Activated T-helper 2 cell treated with anti-CD3 and anti-CD28 coated beads, Interferon-gamma antibody, Interleukin-2, Interleukin-4, amounts not matched to agents 10 μg/mL and 5 μg/mL and 100 μg/mL, durations not matched to agents 14 hours and 24 hours and 36 hours (primary cell): ENCODE measurements at regions of chr2 and their contacts with region 1.

Region 1: GRCh38 chr2:218406209-218406948 is 6.7 kb downstream of the CTDSP1 start:
- DNase-seq: peak; percentile 91
- H3K4me3 Mint-ChIP-seq: peak overlapping the region; percentile 76
- H3K27ac Mint-ChIP-seq: peak overlapping the region; percentile 81
- H3K4me1 Mint-ChIP-seq: peaks cover 36% of the 10 kb centered on the region
- H3K27me3 Mint-ChIP-seq: no peaks in the 10 kb centered on the region

Region 2: DNA sequence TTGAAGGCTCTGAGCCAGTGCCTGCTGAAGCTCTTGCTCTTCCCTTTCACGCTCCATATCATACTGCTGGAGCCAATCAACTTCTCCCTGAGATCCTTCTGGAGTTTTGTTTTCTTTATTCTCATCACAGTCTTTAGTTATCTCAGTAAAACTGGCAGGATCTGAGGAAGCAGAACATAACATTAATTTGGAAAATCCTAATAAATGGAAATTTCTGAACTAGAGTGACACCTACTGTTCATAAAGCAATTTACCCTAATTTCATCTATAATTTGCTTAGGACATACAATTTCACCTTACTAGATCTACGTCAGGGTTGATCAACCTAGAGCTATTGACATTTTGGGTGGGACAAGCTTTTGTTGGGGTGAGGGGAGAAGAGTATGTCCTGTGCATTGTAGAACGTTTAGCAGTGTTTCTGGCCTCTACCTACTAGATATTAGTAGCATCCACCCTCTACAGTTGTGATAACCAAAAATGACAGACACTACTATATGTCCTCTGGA is 59.7 kb after region 1 on chr2:
- intact Hi-C with region 1: loop called (anchors 5 kb)
- DNase-seq: no peak
- H3K4me3 Mint-ChIP-seq: no peak overlapping the region
- H3K27ac Mint-ChIP-seq: no peak overlapping the region
- H3K4me1 Mint-ChIP-seq: peaks cover 7% of the 10 kb centered on the region
- H3K27me3 Mint-ChIP-seq: no peaks in the 10 kb centered on the region

Region 3: GRCh38 chr2:218582076-218582475 is 175.7 kb after region 1 on chr2:
- intact Hi-C with region 1: loop called (anchors 5 kb)
- DNase-seq: no peak
- H3K4me3 Mint-ChIP-seq: no peak overlapping the region
- H3K27ac Mint-ChIP-seq: peak overlapping the region; percentile 77
- H3K4me1 Mint-ChIP-seq: peaks cover 33% of the 10 kb centered on the region
- H3K27me3 Mint-ChIP-seq: no peaks in the 10 kb centered on the region

Region 4: DNA sequence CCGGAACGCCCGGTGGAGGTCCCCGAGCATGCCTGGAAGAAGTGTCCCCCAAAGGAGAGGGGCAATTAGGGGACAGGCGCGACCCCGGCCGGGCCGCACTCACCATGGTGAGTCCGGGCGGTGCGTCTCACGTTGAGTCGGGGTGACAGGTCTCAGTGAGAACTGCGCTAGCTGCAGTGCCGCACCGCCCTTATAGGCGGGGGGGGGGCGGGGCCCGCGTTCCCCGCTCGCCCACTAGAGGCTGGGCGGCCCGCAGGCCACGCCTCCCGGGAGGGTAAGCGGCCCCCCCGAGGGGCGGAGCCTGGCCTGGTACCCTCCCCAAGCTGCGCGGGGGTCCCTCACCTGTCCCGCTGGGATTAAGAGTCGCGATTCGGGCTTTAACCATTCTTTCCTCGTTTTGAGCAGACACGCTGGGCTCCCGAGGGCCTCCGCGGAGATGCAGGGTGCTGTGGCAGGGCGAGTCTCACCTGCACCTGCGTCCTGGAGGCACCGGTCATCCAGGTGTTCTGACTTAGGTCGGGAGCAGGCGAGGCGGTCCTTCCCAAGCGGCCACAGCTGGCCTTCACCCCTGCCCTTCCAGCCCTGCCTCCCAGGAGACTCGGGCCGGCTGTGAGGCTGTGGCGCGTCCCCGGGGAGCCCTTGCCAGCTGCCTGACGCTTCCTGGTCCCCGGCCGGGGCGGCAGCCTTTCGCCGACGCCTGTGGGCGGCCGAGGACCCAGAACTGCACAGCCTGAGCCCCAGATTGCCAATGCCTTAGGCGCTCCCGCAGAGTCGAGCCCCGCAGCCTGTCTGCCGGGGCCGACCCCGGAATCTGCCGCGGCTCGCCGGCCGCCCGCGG is 847.6 kb after region 1 on chr2 and contains the start of gene TUBA4A:
- intact Hi-C with region 1: loop called (anchors 10 kb)
- DNase-seq: peak; percentile 84
- H3K4me3 Mint-ChIP-seq: peak within 1 kb of the TSS; percentile 77
- H3K27ac Mint-ChIP-seq: peak within 1 kb of the TSS; percentile 92
- H3K4me1 Mint-ChIP-seq: peaks cover 46% of the 10 kb centered on the region
- H3K27me3 Mint-ChIP-seq: no peaks in the 10 kb centered on the region
- total RNA-seq, gene TUBA4A: 220 and 231 TPM in 2 replicates